Heart right ventricle (tissue), 16 donors: ENCODE measurements at regions of chr14 and their contacts with region 1.

Region 1: GRCh38 chr14:103434961-103435360 is 49.7 kb downstream of the MARK3 start:
- DNase-seq: peak in 1 of 2 donors; percentile 13
- ATAC-seq: peak in 7 of 8 donors; percentile 39 to 86 (median 63)
- H3K4me3 ChIP-seq: no peak overlapping the region
- H3K27ac ChIP-seq: peak overlapping the region in 8 of 10 donors; percentile 2 to 42 (median 28)
- H3K4me1 ChIP-seq: peaks cover 3 to 64% (median 40%) of the 10 kb centered on the region in 9 donors
- H3K27me3 ChIP-seq: no peaks in the 10 kb centered on the region
- CTCF ChIP-seq: peak in 4 of 9 donors; percentile 10 to 22 (median 18)

Region 2: GRCh38 chr14:103398428-103399195 is 36.3 kb before region 1 on chr14:
- intact Hi-C with region 1: loop called in 1 of 10 experiments (anchors 5 kb)
- DNase-seq: no peak
- ATAC-seq: peak in 2 of 8 donors; percentile 43 to 46
- H3K4me3 ChIP-seq: no peak overlapping the region
- H3K27ac ChIP-seq: peak overlapping the region; percentile 3 to 75 (median 54)
- H3K4me1 ChIP-seq: peaks cover 19 to 99% (median 91%) of the 10 kb centered on the region in 9 donors
- H3K27me3 ChIP-seq: no peaks in the 10 kb centered on the region
- CTCF ChIP-seq: no peak